Activated CD8-positive, alpha-beta memory T cell treated with anti-CD3 and anti-CD28 coated beads, Interleukin-2, amount 10 ng/mL, durations not matched to agents 7 days and 5 days (primary cell): ENCODE measurements at regions of chr16 and their contacts with region 1.

Region 1: GRCh38 chr16:88856828-88857733 is at the starts of genes GALNS and TRAPPC2L:
- DNase-seq: peak; percentile 99
- ATAC-seq: peak; percentile 86
- H3K4me3 Mint-ChIP-seq: peak within 1 kb of the TSS; percentile 94
- H3K27ac Mint-ChIP-seq: peak within 1 kb of the TSS; percentile 91
- H3K4me1 Mint-ChIP-seq: peaks cover 30% of the 10 kb centered on the region
- H3K27me3 Mint-ChIP-seq: no peaks in the 10 kb centered on the region
- total RNA-seq, gene GALNS: 30.8 to 38.8 TPM
- total RNA-seq, gene TRAPPC2L: 49.2 to 51.3 TPM

Region 2: DNA sequence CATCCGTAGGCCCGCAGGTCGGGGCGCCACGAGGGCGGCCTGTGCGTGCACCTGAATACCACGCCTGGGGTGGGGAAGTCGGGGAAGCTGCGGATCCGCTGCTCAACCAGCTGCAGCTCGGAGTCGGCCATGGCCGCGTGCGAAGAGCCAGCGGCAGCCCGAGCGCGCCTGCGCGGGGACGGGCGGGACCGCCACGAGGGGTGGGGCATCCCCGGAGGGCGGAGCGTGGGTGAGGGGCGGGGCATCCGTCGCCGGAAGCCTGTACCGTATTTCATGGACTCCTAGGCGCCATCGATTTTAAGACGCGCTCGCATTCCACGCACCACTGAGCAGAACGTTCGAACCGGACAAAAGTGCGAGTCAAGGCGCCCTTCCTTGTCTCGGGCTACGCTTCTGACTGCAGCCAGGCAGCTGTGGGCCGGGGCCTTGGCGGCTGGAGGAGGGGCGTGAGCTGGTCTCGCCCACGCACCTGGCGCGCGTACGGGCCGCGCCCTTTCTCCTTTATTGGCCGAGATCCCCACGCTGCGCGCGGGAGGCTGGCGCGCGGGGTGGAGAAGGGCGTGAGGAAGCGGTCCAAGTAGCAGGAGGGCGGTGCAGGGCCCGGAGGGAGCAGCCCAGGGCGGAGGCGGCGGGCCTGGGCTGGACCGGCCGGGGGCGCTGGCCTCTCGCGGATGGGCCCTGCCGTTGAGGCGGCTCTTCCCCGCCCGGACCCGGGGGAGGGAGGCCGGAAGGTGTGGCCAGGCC is 45.1 kb before region 1 on chr16 and contains the start of gene APRT:
- CTCF ChIA-PET with region 1: interaction called, 66 read pairs
- DNase-seq: peak; percentile 97
- ATAC-seq: peak; percentile 84
- H3K4me3 Mint-ChIP-seq: peak within 1 kb of the TSS; percentile 88
- H3K27ac Mint-ChIP-seq: peak within 1 kb of the TSS; percentile 98
- H3K4me1 Mint-ChIP-seq: peaks cover 30% of the 10 kb centered on the region
- H3K27me3 Mint-ChIP-seq: no peaks in the 10 kb centered on the region
- total RNA-seq, gene APRT: 127 to 148 TPM